H1 (cell line): ENCODE measurements at regions of chr2 and their contacts with region 1.

Region 1: DNA sequence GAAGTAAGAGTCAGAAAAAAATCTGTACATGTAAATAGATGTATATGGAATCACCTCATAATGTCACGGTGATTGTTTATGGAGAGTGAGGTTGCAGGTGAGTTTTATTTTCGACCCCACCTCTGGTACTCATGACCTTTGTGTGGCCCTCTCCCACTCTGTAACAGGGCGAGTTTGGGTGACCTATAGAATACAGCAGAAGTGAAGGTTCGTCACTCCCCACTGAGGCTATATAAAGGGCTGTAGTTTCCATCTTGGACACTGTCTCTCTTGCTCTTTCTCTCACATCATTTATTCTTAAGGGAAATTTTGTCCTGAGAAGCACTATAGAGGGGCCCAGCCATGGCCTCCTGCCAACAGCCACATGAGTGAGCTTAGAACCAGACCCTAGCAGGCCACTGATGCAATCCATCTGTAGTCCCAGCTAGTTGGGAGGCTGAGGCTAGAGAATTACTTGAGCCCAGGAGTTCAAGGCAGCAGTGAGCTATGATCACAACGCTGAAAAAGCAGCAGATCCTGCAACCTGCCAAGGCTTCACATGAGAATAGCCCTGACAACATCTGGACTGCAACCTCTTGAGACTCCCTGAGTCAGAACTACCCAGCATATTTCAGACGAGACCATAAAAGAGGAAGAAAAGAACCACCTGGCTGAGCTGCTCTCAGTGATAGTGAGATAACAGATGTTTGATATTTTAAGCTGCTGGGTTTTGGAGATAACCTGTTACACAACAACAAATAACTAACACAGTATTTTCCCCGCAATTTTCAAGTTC is 74.3 kb upstream of the SLC1A4 start:
- DNase-seq: no peak
- H3K4me3 ChIP-seq: no peak overlapping the region
- H3K27ac ChIP-seq: no peak overlapping the region
- H3K4me1 ChIP-seq: peaks cover 0 to 6% (median 4%) of the 10 kb centered on the region in 4 experiments; a peak in 6 of 7 replicates
- H3K27me3 ChIP-seq: peaks cover 0 to 7% (median 3%) of the 10 kb centered on the region in 4 experiments; a peak in 3 of 7 replicates
- CTCF ChIP-seq: no peak
- EP300 ChIP-seq: no peak
- POLR2A ChIP-seq: no peak
- RAD21 ChIP-seq: no peak

Region 2: GRCh38 chr2:64904413-64905329 is 10.3 kb before region 1 on chr2:
- CTCF ChIA-PET with region 1: interaction called, 64 read pairs
- POLR2A ChIA-PET with region 1: interaction called, 3 read pairs
- DNase-seq: no peak
- H3K4me3 ChIP-seq: no peak overlapping the region
- H3K27ac ChIP-seq: no peak overlapping the region
- H3K4me1 ChIP-seq: peaks cover 0 to 5% (median 0%) of the 10 kb centered on the region in 4 experiments; a peak in 1 of 7 replicates
- H3K27me3 ChIP-seq: no peaks in the 10 kb centered on the region; a peak in 1 of 7 replicates
- CTCF ChIP-seq: no peak
- EP300 ChIP-seq: no peak
- POLR2A ChIP-seq: no peak
- RAD21 ChIP-seq: no peak

Region 3: GRCh38 chr2:64932371-64933216 is 17.7 kb after region 1 on chr2:
- CTCF ChIA-PET with region 1: interaction called, 20 read pairs
- POLR2A ChIA-PET with region 1: no interaction called
- DNase-seq: no peak
- H3K4me3 ChIP-seq: no peak overlapping the region
- H3K27ac ChIP-seq: no peak overlapping the region
- H3K4me1 ChIP-seq: peaks cover 0 to 1% (median 0%) of the 10 kb centered on the region in 4 experiments; a peak in 1 of 7 replicates
- H3K27me3 ChIP-seq: no peaks in the 10 kb centered on the region
- CTCF ChIP-seq: no peak
- EP300 ChIP-seq: no peak
- POLR2A ChIP-seq: no peak
- RAD21 ChIP-seq: no peak

Region 4: DNA sequence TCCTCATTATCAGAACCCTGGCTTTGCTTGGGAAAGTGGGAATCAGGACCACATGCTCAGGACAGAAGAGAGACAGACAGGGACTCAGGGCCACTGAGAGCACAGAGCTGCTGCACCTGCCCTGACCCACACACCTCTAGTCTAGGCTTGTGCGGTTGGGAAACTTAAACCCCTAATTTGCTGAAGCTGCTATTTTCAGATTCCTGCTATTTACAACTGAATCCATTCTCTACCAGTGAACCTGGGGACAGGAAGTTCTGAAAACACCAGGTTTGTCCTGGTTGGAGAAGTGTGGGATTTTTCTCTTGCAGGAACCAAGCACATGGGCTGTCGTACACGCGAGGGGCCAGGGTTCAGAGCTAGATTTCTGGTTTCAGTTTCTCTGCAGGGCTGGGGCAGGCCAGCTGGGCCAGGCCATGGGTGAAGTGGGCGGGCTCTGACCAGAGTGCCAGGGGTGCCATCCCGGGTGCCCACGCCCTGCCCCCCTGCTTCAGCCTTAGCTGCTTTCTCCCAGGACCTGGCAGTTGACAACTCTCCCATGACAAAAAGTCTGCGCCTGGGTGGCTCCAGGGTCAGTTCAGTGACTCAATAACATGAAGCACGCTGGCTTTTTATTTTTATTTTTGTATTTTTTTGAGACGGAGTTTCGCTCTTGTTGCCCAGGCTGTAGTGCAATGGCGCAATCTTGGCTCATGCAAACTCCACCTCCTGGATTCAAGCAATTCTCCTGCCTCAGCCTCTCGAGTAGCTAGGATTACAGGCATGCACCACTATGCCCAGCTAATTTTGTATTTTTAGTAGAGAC is 23.0 kb after region 1 on chr2:
- CTCF ChIA-PET with region 1: interaction called, 20 read pairs
- POLR2A ChIA-PET with region 1: no interaction called
- DNase-seq: no peak
- H3K4me3 ChIP-seq: no peak overlapping the region
- H3K27ac ChIP-seq: no peak overlapping the region
- H3K4me1 ChIP-seq: peaks cover 0 to 5% (median 3%) of the 10 kb centered on the region in 4 experiments; a peak in 4 of 7 replicates
- H3K27me3 ChIP-seq: no peaks in the 10 kb centered on the region
- CTCF ChIP-seq: no peak
- EP300 ChIP-seq: no peak
- POLR2A ChIP-seq: no peak
- RAD21 ChIP-seq: no peak

Region 5: GRCh38 chr2:64950207-64951160 is 35.6 kb after region 1 on chr2:
- CTCF ChIA-PET with region 1: no interaction called
- POLR2A ChIA-PET with region 1: no interaction called
- DNase-seq: peak in 1 of 2 experiments; percentile 25
- H3K4me3 ChIP-seq: no peak overlapping the region
- H3K27ac ChIP-seq: no peak overlapping the region
- H3K4me1 ChIP-seq: peaks cover 0 to 6% (median 0%) of the 10 kb centered on the region in 4 experiments; a peak in 1 of 7 replicates
- H3K27me3 ChIP-seq: no peaks in the 10 kb centered on the region
- CTCF ChIP-seq: no peak
- EP300 ChIP-seq: no peak
- POLR2A ChIP-seq: no peak
- RAD21 ChIP-seq: no peak

Region 6: DNA sequence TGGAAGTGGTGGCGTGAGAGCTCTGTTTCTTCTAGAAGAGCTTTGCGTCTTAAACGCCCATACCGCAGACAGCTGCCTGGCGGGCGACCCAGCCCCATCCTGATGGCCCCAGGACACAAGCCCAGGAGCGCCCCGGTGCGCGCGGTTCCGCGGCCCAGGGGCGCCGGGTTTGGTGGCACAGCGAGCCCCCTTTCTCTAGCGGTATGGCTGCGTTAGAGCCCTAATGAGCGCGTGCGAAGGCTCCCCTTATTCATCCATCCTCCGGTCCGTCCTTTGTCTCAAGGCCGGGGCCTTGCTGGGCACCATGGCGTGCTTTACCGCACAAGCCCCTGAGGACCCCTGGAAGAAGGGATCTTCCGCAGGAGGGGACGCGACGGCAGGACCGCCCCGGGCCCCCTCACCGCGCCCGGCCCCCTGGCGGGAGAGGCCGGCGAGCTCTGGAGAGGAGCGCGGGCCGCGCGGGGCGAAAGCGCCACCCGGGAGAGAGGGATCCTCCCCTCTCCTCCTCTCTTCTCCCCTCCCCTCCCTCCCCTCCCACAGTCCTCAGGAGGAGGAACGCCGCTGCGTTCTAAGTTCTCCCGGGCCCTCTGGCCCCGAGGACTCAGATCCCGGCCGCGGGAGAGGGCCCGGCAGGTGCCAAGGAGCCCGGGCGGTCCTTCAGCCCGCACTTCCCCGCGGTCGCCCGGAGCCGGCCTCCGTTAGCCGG is 73.7 kb after region 1 on chr2:
- CTCF ChIA-PET with region 1: interaction called, 11 read pairs
- POLR2A ChIA-PET with region 1: no interaction called
- DNase-seq: peak in 1 of 2 experiments; percentile 71
- H3K4me3 ChIP-seq: peak overlapping the region; percentile 56 to 84 (median 64)
- H3K27ac ChIP-seq: no peak overlapping the region
- H3K4me1 ChIP-seq: peaks cover 0 to 7% (median 5%) of the 10 kb centered on the region in 4 experiments; a peak in 5 of 7 replicates
- H3K27me3 ChIP-seq: peaks cover 28 to 61% (median 49%) of the 10 kb centered on the region in 4 experiments
- CTCF ChIP-seq: no peak
- EP300 ChIP-seq: no peak
- POLR2A ChIP-seq: no peak
- RAD21 ChIP-seq: no peak

Region 7: DNA sequence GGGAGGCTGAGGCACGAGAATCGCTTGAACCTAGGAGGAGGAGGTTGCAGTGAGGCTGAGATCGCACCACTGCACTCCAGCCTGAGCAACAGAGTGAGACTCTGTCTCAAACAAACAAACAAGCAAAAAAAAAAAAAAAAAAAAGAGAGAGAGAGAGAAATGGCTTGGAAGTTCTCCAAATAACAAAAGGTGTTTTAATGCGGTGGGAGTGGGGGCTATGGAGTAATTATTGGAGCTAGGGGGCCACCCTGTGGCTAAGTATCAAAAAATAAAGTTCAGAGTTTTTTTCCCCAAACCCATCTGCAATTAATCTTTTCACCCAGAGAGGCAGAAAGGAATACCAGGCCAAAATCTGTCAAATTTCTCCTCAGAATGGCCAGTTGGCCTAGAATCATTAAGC is 118.3 kb after region 1 on chr2:
- CTCF ChIA-PET with region 1: interaction called, 22 read pairs
- POLR2A ChIA-PET with region 1: no interaction called
- DNase-seq: no peak
- H3K4me3 ChIP-seq: no peak overlapping the region
- H3K27ac ChIP-seq: no peak overlapping the region
- H3K4me1 ChIP-seq: peaks cover 7 to 21% (median 15%) of the 10 kb centered on the region in 4 experiments; a peak in 6 of 7 replicates
- H3K27me3 ChIP-seq: no peaks in the 10 kb centered on the region
- CTCF ChIP-seq: no peak
- EP300 ChIP-seq: no peak
- POLR2A ChIP-seq: no peak
- RAD21 ChIP-seq: peak; percentile 34 to 43

Region 8: DNA sequence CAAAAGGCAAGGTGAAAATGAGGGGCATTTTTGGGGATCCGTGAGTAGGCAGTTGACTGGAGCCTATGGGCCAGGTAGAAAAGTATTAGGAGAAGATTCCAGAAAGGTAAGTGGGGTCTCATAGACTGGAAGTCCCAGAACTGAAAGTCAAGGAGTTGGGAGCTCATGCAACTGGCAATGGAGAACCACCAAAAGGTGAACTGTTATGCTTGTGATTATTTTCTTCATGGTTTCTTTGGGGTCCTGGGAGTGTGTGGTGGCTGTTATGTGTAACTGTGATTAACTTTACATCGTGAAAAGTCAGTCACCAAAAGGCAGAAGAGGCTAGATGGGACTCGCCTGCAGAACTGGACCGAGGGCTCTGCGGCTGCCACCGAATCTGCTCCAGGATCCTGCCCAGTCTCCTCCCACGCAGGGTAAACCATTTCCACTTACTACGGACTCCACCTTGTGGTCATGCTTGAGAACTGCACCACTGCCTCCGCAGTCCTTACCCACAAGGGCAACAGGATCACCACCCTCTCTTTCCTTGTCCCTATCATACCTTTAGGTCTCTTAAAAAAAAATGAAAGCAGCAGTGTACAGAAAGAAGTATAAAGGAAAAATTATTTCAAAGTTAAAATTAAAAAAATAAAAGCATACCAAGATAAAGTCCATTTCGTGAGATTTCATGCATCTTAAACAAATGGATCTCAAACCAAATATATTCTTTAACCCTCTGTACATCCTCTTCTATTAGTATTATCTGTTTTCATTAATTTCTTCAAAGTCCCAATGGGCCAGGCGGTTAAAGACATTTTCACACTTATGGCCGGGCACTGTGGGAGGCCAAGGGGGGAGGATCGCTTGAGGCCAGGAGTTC is 125.7 kb after region 1 on chr2:
- CTCF ChIA-PET with region 1: interaction called, 38 read pairs
- POLR2A ChIA-PET with region 1: no interaction called
- DNase-seq: peak in 1 of 2 experiments; percentile 85
- H3K4me3 ChIP-seq: no peak overlapping the region
- H3K27ac ChIP-seq: no peak overlapping the region
- H3K4me1 ChIP-seq: peaks cover 2 to 7% (median 5%) of the 10 kb centered on the region in 4 experiments; a peak in 5 of 7 replicates
- H3K27me3 ChIP-seq: no peaks in the 10 kb centered on the region
- CTCF ChIP-seq: peak; percentile 81 to 97 (median 91)
- EP300 ChIP-seq: no peak
- POLR2A ChIP-seq: no peak
- RAD21 ChIP-seq: peak; percentile 85